ENCODE measurements at regions of chr10 and their contacts with region 1.

Region 1: GRCh38 chr10:6701289-6701688 is 121.2 kb upstream of the PRKCQ start:
- DNase-seq: no peak
- H3K4me3 ChIP-seq: no peak overlapping the region
- H3K27ac ChIP-seq: no peak overlapping the region
- H3K4me1 ChIP-seq: no peaks in the 10 kb centered on the region
- H3K27me3 ChIP-seq: no peaks in the 10 kb centered on the region; the same call in 1 of the 2 replicates
- CTCF ChIP-seq: peak; percentile 25
- EP300 ChIP-seq: no peak
- RAD21 ChIP-seq: 0 out of 2 replicates have a peak, but pooled peaks have one; percentile 18

Region 2: DNA sequence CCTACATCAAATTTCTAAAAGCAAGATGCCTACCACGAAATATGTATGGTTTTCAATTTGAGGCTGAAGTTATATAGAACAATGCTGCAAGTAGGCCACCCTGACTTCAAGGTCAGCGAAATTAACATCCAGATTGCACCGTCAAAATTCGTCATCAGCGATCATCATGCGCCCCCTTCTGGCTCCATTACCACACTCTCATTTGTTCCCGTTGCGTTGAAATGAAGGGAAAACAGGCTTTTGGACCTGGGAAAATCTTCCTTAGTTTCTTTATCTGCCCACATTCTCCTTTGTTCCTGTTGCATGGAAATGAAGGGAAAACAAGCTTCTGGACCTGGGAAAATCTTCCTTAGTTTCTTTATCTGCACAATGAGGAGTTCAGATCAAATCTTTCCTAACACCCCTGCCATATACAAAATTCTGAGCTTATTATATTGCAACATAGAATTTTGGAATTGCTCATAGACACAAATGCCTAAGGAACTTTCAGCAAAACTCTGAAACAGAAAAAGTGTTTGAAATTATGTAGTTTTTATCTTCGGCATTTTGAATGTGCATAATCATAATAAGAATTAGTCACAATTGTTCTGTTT is 23.0 kb before region 1 on chr10:
- CTCF ChIA-PET with region 1: interaction called, 16 read pairs
- POLR2A ChIA-PET with region 1: no interaction called
- DNase-seq: peak; percentile 48
- H3K4me3 ChIP-seq: no peak overlapping the region
- H3K27ac ChIP-seq: no peak overlapping the region
- H3K4me1 ChIP-seq: no peaks in the 10 kb centered on the region
- H3K27me3 ChIP-seq: 0 out of 2 replicates have a peak, but pooled peaks cover 13% of the 10 kb centered on the region
- CTCF ChIP-seq: peak; percentile 74
- EP300 ChIP-seq: no peak
- RAD21 ChIP-seq: peak; percentile 76

Measured in SK-N-SH (cell line).